MCF 10A (cell line): ENCODE measurements at regions of chr19 and their contacts with region 1.

Region 1: GRCh38 chr19:11125994-11126685 is 29.4 kb downstream of the SPC24 start:
- DNase-seq: peak; percentile 88
- H3K4me3 Mint-ChIP-seq: no peak overlapping the region
- H3K27ac Mint-ChIP-seq: no peak overlapping the region
- H3K4me1 Mint-ChIP-seq: no peaks in the 10 kb centered on the region
- H3K27me3 Mint-ChIP-seq: no peaks in the 10 kb centered on the region
- CTCF ChIP-seq: peak; percentile 71

Region 2: DNA sequence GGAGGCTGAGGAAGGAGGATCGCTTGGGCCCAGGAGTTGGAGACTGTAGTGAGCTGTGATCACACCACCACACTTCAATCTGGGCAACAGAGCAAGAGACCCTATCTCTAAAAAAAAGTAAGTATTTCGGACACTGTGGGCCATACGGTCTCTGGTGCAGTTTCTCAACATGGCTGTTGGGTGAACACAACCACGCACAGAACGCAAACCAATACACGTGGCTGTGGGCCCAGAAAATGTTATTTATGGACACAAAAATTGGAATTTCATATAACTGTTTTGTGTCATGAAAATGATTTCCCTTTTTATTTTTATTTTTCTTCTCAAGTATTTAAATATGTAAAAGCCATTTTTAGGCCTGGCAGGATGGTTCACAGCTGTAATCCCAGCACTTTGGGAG is 17.4 kb before region 1 on chr19:
- CTCF ChIA-PET with region 1: interaction called, 10 read pairs
- POLR2A ChIA-PET with region 1: interaction called, 3 read pairs
- intact Hi-C with region 1: no loop called
- DNase-seq: no peak
- H3K4me3 Mint-ChIP-seq: no peak overlapping the region
- H3K27ac Mint-ChIP-seq: no peak overlapping the region
- H3K4me1 Mint-ChIP-seq: no peaks in the 10 kb centered on the region
- H3K27me3 Mint-ChIP-seq: no peaks in the 10 kb centered on the region
- CTCF ChIP-seq: no peak

Region 3: GRCh38 chr19:11203194-11204075 is 77.3 kb after region 1 on chr19:
- CTCF ChIA-PET with region 1: interaction called, 12 read pairs
- POLR2A ChIA-PET with region 1: no interaction called
- intact Hi-C with region 1: no loop called
- DNase-seq: peak; percentile 78
- H3K4me3 Mint-ChIP-seq: peak overlapping the region; percentile 17
- H3K27ac Mint-ChIP-seq: peak overlapping the region; percentile 47
- H3K4me1 Mint-ChIP-seq: peaks cover 25% of the 10 kb centered on the region
- H3K27me3 Mint-ChIP-seq: no peaks in the 10 kb centered on the region
- CTCF ChIP-seq: peak; percentile 91

Region 4: DNA sequence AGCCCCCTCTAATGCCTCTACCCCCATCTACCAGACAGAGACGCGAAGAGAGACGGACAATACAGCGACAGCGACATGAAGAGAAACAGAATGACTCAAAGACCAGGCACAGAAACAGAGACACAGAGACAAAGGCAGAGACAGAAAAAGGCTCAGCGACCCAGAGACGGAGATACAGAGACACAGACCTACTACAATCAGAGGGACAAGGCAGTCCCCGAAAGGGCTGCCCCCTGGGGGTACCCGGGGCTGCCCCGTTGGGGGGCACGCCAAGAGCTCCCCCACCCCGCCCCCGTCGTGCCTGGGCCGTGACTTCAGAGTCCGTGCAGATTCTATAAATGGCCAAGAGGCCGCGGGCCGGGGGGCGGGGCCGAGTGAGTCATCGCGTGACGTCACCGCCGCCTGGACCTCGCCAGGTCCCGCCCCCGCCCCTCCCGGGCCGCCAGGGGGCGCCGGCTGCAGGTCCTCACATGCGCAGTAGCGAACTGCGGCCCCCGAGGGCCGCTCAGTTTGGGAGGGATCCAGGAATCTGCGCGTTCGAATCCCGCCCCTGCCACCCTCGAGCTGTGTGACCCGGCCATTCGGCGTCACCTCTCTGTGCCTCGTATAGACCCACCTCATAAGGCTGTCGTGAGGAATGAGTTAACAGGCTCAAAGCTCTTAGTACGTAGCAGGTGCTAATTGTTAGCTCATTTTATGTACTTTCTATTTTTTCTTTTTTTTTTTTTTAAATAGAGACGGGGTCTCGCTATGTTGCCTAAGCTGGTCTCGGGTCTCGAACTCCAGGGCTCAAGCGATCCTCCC is 409.9 kb after region 1 on chr19:
- CTCF ChIA-PET with region 1: no interaction called
- POLR2A ChIA-PET with region 1: no interaction called
- intact Hi-C with region 1: no loop called
- DNase-seq: peak; percentile 86
- H3K4me3 Mint-ChIP-seq: peak overlapping the region; percentile 18
- H3K27ac Mint-ChIP-seq: peak overlapping the region; percentile 79
- H3K4me1 Mint-ChIP-seq: peaks cover 11% of the 10 kb centered on the region
- H3K27me3 Mint-ChIP-seq: no peaks in the 10 kb centered on the region
- CTCF ChIP-seq: peak; percentile 85